CD4-positive, alpha-beta memory T cell (primary cell): ENCODE measurements at regions of chr19 and their contacts with region 1.

Region 1: GRCh38 chr19:12495002-12495802 is 10.6 kb upstream of the ZNF709 start:
- DNase-seq: peak; percentile 86 to 94 (median 92)
- H3K4me3 ChIP-seq: peak overlapping the region; percentile 62 to 64
- H3K4me3 Mint-ChIP-seq: peak overlapping the region; percentile 87 to 98 (median 92)
- H3K27ac ChIP-seq: peak overlapping the region; percentile 51
- H3K27ac Mint-ChIP-seq: peak overlapping the region; percentile 89 to 97 (median 96)
- H3K4me1 ChIP-seq: peaks cover 5% of the 10 kb centered on the region
- H3K4me1 Mint-ChIP-seq: peaks cover 7 to 16% (median 11%) of the 10 kb centered on the region in 4 donors
- H3K27me3 ChIP-seq: no peaks in the 10 kb centered on the region
- H3K27me3 Mint-ChIP-seq: no peaks in the 10 kb centered on the region

Region 2: DNA sequence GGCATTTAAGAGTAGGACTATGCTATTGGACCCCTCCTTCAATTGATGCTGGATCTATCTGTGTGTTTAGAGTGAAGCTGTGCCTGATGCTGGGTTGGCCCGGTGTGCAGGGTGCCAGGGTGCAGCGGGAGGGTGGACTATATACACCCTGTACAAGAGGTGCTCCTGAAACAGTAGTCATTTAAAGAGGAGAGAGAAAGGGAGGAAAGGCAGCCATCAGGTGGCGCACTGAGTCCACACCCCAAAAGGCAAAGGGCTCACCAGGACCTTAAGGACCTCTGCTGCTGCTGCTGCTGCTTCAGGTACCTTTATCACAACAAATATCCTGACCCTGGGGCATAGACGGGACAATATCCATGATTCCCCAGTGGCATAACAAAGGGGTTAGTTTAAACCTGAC is 293.0 kb before region 1 on chr19:
- CTCF ChIA-PET with region 1: no interaction called
- POLR2A ChIA-PET with region 1: no interaction called
- intact Hi-C with region 1: loop called (anchors 1 kb)
- DNase-seq: peak; percentile 41 to 57 (median 50)
- H3K4me3 ChIP-seq: no peak overlapping the region
- H3K4me3 Mint-ChIP-seq: no peak overlapping the region
- H3K27ac ChIP-seq: no peak overlapping the region
- H3K27ac Mint-ChIP-seq: no peak overlapping the region
- H3K4me1 ChIP-seq: peaks cover 8% of the 10 kb centered on the region
- H3K4me1 Mint-ChIP-seq: peaks cover 6 to 24% (median 6%) of the 10 kb centered on the region in 4 donors
- H3K27me3 ChIP-seq: no peaks in the 10 kb centered on the region
- H3K27me3 Mint-ChIP-seq: no peaks in the 10 kb centered on the region

Region 3: DNA sequence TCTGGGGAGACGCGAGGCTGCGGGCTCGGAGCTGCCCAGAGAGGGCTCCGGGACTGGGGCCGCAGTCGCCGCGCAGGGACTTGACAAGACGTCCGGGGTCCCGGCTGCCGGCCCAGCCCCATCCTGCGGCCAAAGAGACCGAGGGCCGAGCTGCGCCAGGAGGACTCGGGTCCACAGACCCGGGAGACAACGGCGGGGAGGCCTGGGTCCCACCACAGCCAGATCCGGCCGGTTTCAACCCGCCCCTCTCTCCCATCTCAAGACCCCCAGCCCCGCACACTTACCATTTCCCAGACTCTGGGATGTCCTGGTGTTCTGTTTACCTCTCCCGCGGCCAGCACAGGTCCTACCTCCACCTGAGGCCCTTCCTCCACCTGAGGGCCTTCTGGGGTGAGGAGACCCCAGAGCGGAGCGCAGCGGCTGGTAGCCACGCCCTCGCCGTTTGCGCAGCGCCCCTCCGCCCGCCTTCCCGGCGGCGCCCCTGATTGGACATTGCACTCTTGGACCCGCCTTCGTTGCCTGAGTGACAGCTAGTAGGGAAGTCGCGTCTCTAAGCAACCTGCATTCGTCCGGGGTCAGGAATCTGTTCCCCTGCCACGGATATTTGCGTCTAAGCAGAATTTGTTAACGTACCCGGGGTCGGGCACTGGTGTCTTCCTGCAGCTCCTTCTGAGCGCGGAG is 10.7 kb before region 1 on chr19 and contains the start of gene ZNF709:
- CTCF ChIA-PET with region 1: interaction called, 7 read pairs
- POLR2A ChIA-PET with region 1: interaction called, 31 read pairs
- intact Hi-C with region 1: loop called (anchors 1 kb)
- DNase-seq: peak; percentile 82 to 88 (median 85)
- H3K4me3 ChIP-seq: peak within 1 kb of the TSS; percentile 91 to 99
- H3K4me3 Mint-ChIP-seq: peak within 1 kb of the TSS; percentile 94 to 98 (median 96)
- H3K27ac ChIP-seq: peak within 1 kb of the TSS; percentile 77
- H3K27ac Mint-ChIP-seq: peak within 1 kb of the TSS; percentile 83 to 97 (median 95)
- H3K4me1 ChIP-seq: peaks cover 26% of the 10 kb centered on the region
- H3K4me1 Mint-ChIP-seq: peaks cover 23 to 36% (median 28%) of the 10 kb centered on the region in 4 donors
- H3K27me3 ChIP-seq: no peaks in the 10 kb centered on the region
- H3K27me3 Mint-ChIP-seq: no peaks in the 10 kb centered on the region
- total RNA-seq, gene ZNF709: 7.1 to 9.6 TPM

Region 4: DNA sequence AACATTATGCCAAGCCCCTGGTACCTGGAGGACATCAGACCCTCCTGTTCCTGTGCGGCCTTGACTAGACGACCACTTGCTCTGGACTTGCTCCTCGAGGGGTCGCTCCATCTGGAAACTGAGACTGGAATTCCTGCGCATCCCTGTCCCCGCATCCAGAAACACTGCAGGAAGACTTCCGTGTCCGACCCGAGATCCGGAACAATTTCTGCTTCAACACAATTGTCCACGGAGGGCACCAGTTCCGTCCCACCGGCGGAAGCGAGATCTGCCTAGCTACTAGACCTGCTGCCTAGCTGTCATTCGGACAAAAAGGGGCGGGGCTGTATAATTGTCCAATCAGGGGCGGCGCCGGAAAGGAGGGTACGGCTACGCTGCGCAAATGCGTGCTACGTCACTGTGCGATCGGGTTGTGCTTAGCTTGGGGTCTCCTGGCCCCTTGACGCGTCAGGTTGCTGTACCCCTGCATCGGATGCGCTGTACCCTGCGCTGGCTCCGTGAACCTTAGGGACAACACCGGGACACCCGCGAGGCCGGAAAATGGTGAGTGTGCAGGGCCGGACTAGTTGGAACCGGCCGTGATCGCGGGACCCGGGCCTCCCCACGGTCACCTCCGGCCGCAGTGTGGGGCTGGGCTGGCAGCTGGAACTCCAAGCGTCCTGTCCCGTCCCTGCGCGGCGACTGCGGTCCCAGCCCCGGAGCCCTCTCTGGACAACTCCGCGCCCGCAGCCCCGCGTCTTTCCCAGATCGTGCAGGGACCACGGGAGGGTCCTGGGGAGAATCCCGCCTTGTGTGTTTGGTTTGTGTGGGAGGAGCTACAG is 115.5 kb after region 1 on chr19 and contains the starts of genes ZNF490 and ZNF791:
- CTCF ChIA-PET with region 1: no interaction called
- POLR2A ChIA-PET with region 1: interaction called, 3 read pairs
- intact Hi-C with region 1: loop called (anchors 5 kb)
- DNase-seq: peak; percentile 93 to 98 (median 94)
- H3K4me3 ChIP-seq: peak within 1 kb of the TSS; percentile 89 to 100
- H3K4me3 Mint-ChIP-seq: peak within 1 kb of the TSS; percentile 99 to 100 (median 100)
- H3K27ac ChIP-seq: peak within 1 kb of the TSS; percentile 88
- H3K27ac Mint-ChIP-seq: peak within 1 kb of the TSS; percentile 99 to 100 (median 100)
- H3K4me1 ChIP-seq: peaks cover 57% of the 10 kb centered on the region
- H3K4me1 Mint-ChIP-seq: peaks cover 21 to 59% (median 35%) of the 10 kb centered on the region in 4 donors
- H3K27me3 ChIP-seq: no peaks in the 10 kb centered on the region
- H3K27me3 Mint-ChIP-seq: no peaks in the 10 kb centered on the region
- total RNA-seq, gene ZNF490: 10.6 to 11.8 TPM
- total RNA-seq, gene ZNF791: 46.0 to 46.3 TPM

Region 5: GRCh38 chr19:12672744-12673143 is 177.5 kb after region 1 on chr19:
- CTCF ChIA-PET with region 1: no interaction called
- POLR2A ChIA-PET with region 1: interaction called, 5 read pairs
- intact Hi-C with region 1: loop called (anchors 1 kb)
- DNase-seq: no peak
- H3K4me3 ChIP-seq: no peak overlapping the region
- H3K4me3 Mint-ChIP-seq: no peak overlapping the region
- H3K27ac ChIP-seq: no peak overlapping the region
- H3K27ac Mint-ChIP-seq: peak overlapping the region in 1 of 7 donors; percentile 79
- H3K4me1 ChIP-seq: peaks cover 35% of the 10 kb centered on the region
- H3K4me1 Mint-ChIP-seq: peaks cover 22 to 50% (median 36%) of the 10 kb centered on the region in 4 donors
- H3K27me3 ChIP-seq: no peaks in the 10 kb centered on the region
- H3K27me3 Mint-ChIP-seq: no peaks in the 10 kb centered on the region